ENCODE measurements at regions of chr19 and their contacts with region 1.

Region 1: GRCh38 chr19:8355631-8356402 is 8.1 kb upstream of the ANGPTL4 start:
- DNase-seq: no peak
- ATAC-seq: no peak
- H3K4me3 Mint-ChIP-seq: no peak overlapping the region
- H3K27ac Mint-ChIP-seq: no peak overlapping the region
- H3K4me1 Mint-ChIP-seq: peaks cover 14% of the 10 kb centered on the region
- H3K27me3 Mint-ChIP-seq: peaks cover 16% of the 10 kb centered on the region
- CTCF ChIP-seq: no peak

Region 2: GRCh38 chr19:8213827-8214672 is 141.8 kb before region 1 on chr19:
- CTCF ChIA-PET with region 1: no interaction called
- POLR2A ChIA-PET with region 1: no interaction called
- DNase-seq: no peak
- ATAC-seq: no peak
- H3K4me3 Mint-ChIP-seq: no peak overlapping the region
- H3K27ac Mint-ChIP-seq: peak overlapping the region; percentile 84
- H3K4me1 Mint-ChIP-seq: peaks cover 39% of the 10 kb centered on the region
- H3K27me3 Mint-ChIP-seq: no peaks in the 10 kb centered on the region
- CTCF ChIP-seq: no peak

Region 3: DNA sequence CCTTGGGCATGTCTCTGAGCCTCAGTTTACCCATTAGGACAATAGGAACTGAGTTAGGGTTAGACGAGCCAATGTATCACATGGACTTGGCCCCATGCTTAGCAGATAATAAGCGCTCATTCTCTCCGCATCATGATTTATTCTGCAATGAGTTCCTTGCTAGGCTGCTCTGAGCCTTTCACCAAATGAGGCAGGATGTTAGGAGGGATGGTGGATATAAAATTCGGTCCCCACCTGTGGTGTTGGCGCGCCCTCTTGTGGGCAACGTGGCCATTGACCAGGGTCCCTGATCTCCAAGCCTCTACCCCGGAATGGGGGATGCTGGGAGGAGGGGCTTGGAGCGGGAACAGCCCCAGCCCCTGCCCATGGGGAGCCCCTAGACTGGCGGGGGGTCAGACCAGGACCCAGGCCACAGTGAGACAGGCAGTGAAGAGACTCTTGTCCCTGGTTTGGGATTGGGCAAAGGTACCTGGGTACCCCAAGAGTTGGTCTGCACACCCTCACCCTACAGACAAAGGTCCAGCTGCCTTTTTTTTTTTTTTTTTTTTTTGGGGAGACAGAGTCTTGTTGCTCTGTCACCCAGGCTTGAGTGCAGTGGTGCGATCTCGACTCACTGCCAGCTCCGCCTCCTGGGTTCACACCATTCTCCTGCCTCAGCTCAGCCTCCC is 102.8 kb before region 1 on chr19:
- CTCF ChIA-PET with region 1: no interaction called
- POLR2A ChIA-PET with region 1: no interaction called
- DNase-seq: peak; percentile 95
- ATAC-seq: peak; percentile 88
- H3K4me3 Mint-ChIP-seq: no peak overlapping the region
- H3K27ac Mint-ChIP-seq: no peak overlapping the region
- H3K4me1 Mint-ChIP-seq: peaks cover 3% of the 10 kb centered on the region; the same call in 1 of the 2 replicates
- H3K27me3 Mint-ChIP-seq: no peaks in the 10 kb centered on the region
- CTCF ChIP-seq: peak; percentile 97

Region 4: DNA sequence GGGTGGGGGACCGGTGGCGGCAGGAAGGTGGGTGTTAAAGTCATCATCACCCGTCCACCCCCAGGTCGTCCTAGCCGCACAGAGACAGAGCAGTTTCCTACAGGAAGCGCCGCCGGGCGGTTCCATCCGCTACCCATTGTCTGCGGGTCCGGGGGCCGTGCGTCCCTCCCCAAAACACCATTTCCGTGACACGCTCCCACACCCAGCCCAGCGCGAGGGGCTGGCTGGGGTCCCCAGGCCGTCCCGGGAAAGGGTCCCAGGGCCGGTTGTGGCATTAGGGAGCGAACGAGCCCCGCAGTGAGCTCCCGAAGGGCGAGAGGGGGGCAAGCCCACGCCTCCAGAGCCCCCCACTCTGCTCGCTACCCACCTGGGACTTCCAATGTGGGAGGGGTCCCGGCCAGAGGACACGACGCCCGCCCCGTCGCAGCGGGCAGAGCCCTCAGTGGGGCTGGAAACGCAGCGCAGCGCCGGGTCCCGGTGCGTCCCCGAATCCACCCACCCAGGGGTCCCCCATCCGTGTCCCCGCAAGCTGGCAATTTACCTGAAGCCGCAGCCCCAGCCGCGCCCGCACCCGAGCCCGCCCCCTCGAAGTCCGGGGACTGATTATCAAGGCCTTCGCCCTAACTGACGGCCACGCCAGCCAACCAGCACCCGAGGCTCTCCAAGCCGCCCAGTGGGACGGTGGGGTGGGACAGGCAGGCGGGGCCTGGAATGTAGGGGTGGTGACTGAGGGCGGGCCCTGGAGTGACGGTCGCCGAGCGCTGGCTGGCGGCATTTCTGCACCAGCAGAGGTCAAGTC is 12.9 kb before region 1 on chr19 and contains the start of gene KANK3:
- CTCF ChIA-PET with region 1: interaction called, 39 read pairs
- POLR2A ChIA-PET with region 1: no interaction called
- DNase-seq: peak; percentile 99
- ATAC-seq: peak; percentile 98
- H3K4me3 Mint-ChIP-seq: peak within 1 kb of the TSS; percentile 64
- H3K27ac Mint-ChIP-seq: no peak within 1 kb of the TSS; the same call in 1 of the 2 replicates
- H3K4me1 Mint-ChIP-seq: peaks cover 22% of the 10 kb centered on the region
- H3K27me3 Mint-ChIP-seq: peaks cover 38% of the 10 kb centered on the region
- CTCF ChIP-seq: no peak
- total RNA-seq, gene KANK3: 7.8 to 8.0 TPM (median 8.0 TPM) in 3 replicates

Region 5: GRCh38 chr19:8389891-8390616 is 34.2 kb after region 1 on chr19 and contains the start of gene RAB11B:
- CTCF ChIA-PET with region 1: interaction called, 47 read pairs
- POLR2A ChIA-PET with region 1: interaction called, 3 read pairs
- DNase-seq: peak; percentile 99
- ATAC-seq: peak; percentile 95
- H3K4me3 Mint-ChIP-seq: peak within 1 kb of the TSS; percentile 89
- H3K27ac Mint-ChIP-seq: peak within 1 kb of the TSS; percentile 97
- H3K4me1 Mint-ChIP-seq: peaks cover 16% of the 10 kb centered on the region
- H3K27me3 Mint-ChIP-seq: no peaks in the 10 kb centered on the region
- CTCF ChIP-seq: no peak
- total RNA-seq, gene RAB11B: 108 to 127 TPM (median 120 TPM) in 3 replicates

Region 6: DNA sequence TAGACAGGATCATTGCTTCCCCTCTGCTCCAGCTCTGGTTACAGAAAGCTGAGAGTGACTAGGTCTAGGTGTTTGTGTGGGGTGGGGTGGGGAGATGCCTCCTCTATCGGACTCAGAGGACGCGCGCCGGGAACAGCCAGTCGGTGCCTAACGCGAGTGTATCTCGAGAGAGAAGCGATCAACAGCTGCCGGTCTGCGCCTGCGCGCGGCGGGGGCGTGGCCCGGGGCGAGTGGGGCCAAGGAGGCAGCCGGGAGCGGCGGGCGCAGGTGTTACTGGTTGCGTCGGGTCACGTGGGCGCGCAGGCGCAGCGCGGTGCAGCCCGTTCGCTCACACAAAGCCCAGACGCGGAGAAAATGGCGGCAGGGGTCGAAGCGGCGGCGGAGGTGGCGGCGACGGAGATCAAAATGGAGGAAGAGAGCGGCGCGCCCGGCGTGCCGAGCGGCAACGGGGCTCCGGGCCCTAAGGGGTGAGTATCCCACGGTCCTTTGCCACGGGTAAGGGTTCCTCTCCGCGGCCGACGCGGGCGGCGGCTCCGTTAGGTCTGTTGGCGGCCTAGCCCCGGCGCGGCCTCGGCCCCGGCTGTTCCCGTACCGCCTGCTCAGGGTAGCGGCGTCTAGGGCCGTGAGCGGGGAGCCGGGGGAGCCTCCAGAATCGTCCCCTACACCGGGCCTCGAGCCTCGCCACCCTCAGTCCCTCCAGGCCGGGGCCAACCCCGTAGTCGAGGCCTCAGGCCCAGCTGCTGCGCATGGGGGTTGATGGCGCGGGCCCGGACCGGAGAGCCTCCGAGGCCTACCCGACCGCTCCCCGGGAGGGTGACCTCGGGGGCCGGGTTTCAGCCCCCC is 89.0 kb after region 1 on chr19 and contains the start of gene HNRNPM:
- CTCF ChIA-PET with region 1: interaction called, 27 read pairs
- POLR2A ChIA-PET with region 1: interaction called, 4 read pairs
- DNase-seq: peak; percentile 100
- ATAC-seq: peak; percentile 84
- H3K4me3 Mint-ChIP-seq: peak within 1 kb of the TSS; percentile 84
- H3K27ac Mint-ChIP-seq: peak within 1 kb of the TSS; percentile 99
- H3K4me1 Mint-ChIP-seq: peaks cover 52% of the 10 kb centered on the region
- H3K27me3 Mint-ChIP-seq: no peaks in the 10 kb centered on the region
- CTCF ChIP-seq: no peak
- total RNA-seq, gene HNRNPM: 309 to 416 TPM (median 343 TPM) in 3 replicates

Region 7: GRCh38 chr19:8513687-8514504 is 158.1 kb after region 1 on chr19 and contains the start of gene ZNF414:
- CTCF ChIA-PET with region 1: interaction called, 18 read pairs
- POLR2A ChIA-PET with region 1: no interaction called
- DNase-seq: peak; percentile 100
- ATAC-seq: peak; percentile 87
- H3K4me3 Mint-ChIP-seq: peak within 1 kb of the TSS; percentile 86
- H3K27ac Mint-ChIP-seq: peak within 1 kb of the TSS; percentile 100
- H3K4me1 Mint-ChIP-seq: peaks cover 16% of the 10 kb centered on the region
- H3K27me3 Mint-ChIP-seq: peaks cover 6% of the 10 kb centered on the region; the same call in 1 of the 2 replicates
- CTCF ChIP-seq: no peak
- total RNA-seq, gene ZNF414: 38.2 to 47.4 TPM (median 46.1 TPM) in 3 replicates